MCF 10A (cell line): ENCODE measurements at regions of chr11 and their contacts with region 1.

Region 1: GRCh38 chr11:86456052-86456939 is 81.6 kb downstream of the CCDC81 start:
- DNase-seq: peak; percentile 86
- H3K4me3 Mint-ChIP-seq: no peak overlapping the region
- H3K27ac Mint-ChIP-seq: no peak overlapping the region
- H3K4me1 Mint-ChIP-seq: peaks cover 26% of the 10 kb centered on the region
- H3K27me3 Mint-ChIP-seq: no peaks in the 10 kb centered on the region
- CTCF ChIP-seq: peak; percentile 78

Region 2: GRCh38 chr11:85941380-85941973 is 514.8 kb before region 1 on chr11:
- CTCF ChIA-PET with region 1: no interaction called
- POLR2A ChIA-PET with region 1: no interaction called
- intact Hi-C with region 1: loop called (anchors 1 kb)
- DNase-seq: peak; percentile 64
- H3K4me3 Mint-ChIP-seq: no peak overlapping the region
- H3K27ac Mint-ChIP-seq: no peak overlapping the region
- H3K4me1 Mint-ChIP-seq: peaks cover 1% of the 10 kb centered on the region
- H3K27me3 Mint-ChIP-seq: no peaks in the 10 kb centered on the region
- CTCF ChIP-seq: peak; percentile 57

Region 3: GRCh38 chr11:86374586-86374985 is 81.7 kb before region 1 on chr11 and contains the start of gene CCDC81:
- CTCF ChIA-PET with region 1: no interaction called
- POLR2A ChIA-PET with region 1: no interaction called
- intact Hi-C with region 1: no loop called
- DNase-seq: no peak
- H3K4me3 Mint-ChIP-seq: no peak within 1 kb of the TSS
- H3K27ac Mint-ChIP-seq: no peak within 1 kb of the TSS
- H3K4me1 Mint-ChIP-seq: peaks cover 13% of the 10 kb centered on the region
- H3K27me3 Mint-ChIP-seq: no peaks in the 10 kb centered on the region
- CTCF ChIP-seq: no peak
- total RNA-seq, gene CCDC81: 0.47 and 1.7 TPM in 2 replicates

Region 4: DNA sequence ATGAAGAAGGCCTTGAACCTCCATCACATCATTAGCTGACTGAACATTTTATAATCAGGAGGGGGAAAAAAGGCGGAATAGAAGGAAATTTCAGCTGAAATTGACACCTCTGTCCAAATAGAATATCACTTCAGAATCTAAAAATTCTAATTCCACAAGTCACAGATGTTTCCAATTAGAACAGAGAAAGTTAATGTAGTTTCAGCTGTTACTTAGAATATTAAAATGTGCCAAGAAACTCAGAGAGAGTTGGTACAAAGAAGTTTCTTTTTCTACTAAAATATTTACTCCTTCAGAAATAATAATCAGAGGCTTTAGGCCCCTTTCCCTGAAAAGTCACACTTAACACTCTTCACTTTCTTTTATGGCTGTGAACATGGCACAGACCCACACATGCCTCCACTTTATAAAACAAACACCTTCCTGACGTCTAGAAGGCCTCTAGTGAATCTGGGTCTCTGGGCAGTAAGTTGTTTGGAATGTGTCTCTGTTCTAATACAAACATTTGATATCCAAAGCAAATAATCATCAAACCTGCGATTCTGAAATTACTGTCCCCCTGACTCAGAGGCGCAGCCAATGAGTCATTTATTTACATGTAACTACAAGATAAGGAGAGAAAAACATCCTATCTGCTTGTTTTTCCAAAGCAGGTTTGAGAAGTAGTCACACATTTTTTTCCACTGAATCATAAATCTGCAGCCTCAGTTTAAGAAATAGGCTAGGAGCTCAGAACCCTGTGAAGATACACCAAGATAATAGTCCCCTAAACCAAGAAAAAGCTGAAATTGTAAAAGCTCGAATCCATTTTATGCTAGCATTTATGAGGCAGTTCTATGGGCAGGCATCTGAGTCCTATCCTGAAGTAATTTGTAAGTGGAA is 67.7 kb after region 1 on chr11:
- CTCF ChIA-PET with region 1: interaction called, 3 read pairs
- POLR2A ChIA-PET with region 1: interaction called, 4 read pairs
- intact Hi-C with region 1: loop called (anchors 2 kb)
- DNase-seq: peak; percentile 81
- H3K4me3 Mint-ChIP-seq: peak overlapping the region; percentile 11
- H3K27ac Mint-ChIP-seq: peak overlapping the region; percentile 74
- H3K4me1 Mint-ChIP-seq: peaks cover 28% of the 10 kb centered on the region
- H3K27me3 Mint-ChIP-seq: no peaks in the 10 kb centered on the region
- CTCF ChIP-seq: no peak

Region 5: DNA sequence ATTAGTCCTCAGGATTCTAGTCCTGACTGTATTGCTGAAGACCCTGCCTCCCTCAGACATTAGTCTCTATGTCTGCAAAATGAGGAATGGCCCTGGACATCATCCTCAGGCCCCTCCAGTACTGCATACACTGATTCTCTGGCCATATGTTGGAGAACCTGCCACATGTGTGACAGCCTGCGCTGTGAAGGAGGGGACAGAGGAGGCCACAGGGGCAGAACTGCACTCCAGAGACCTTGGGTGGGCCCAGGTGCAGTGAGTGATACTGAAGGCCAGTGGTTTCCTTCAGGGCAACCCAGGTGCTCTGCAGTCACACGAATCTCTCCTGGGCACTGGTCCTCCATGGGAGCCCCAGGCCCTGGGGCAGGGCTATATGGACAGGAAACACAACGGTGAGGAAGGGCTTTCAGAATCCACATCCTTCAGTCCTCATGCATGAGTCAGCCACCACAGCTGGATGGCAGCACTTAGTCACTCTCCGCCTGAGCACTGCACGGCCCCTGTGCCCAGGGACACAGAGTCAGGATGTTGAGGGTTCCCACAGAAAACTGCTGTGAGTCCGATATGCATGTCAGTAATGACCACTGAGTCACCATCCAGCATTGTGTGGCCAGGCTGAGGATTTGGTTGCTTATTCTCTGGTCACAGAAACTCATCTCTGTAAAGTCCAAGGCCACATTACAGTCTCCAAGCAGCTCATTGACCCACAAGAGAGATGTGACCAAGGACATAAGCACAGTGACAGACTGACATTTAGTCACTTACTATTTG is 176.4 kb after region 1 on chr11:
- CTCF ChIA-PET with region 1: interaction called, 7 read pairs
- POLR2A ChIA-PET with region 1: no interaction called
- intact Hi-C with region 1: loop called (anchors 2 kb)
- DNase-seq: peak; percentile 79
- H3K4me3 Mint-ChIP-seq: no peak overlapping the region
- H3K27ac Mint-ChIP-seq: peak overlapping the region; percentile 27
- H3K4me1 Mint-ChIP-seq: peaks cover 5% of the 10 kb centered on the region
- H3K27me3 Mint-ChIP-seq: no peaks in the 10 kb centered on the region
- CTCF ChIP-seq: no peak

Region 6: GRCh38 chr11:86818466-86819192 is 362.3 kb after region 1 on chr11:
- CTCF ChIA-PET with region 1: interaction called, 32 read pairs
- POLR2A ChIA-PET with region 1: interaction called, 4 read pairs
- intact Hi-C with region 1: loop called (anchors 1 kb)
- DNase-seq: peak; percentile 75
- H3K4me3 Mint-ChIP-seq: no peak overlapping the region
- H3K27ac Mint-ChIP-seq: no peak overlapping the region
- H3K4me1 Mint-ChIP-seq: peaks cover 21% of the 10 kb centered on the region
- H3K27me3 Mint-ChIP-seq: no peaks in the 10 kb centered on the region
- CTCF ChIP-seq: peak; percentile 59